Posterior vena cava (tissue), 2 donors: ENCODE measurements at regions of chr6 and their contacts with region 1.

Region 1: GRCh38 chr6:35445696-35446095 is 6.4 kb upstream of the FANCE start:
- DNase-seq: no peak

Region 2: DNA sequence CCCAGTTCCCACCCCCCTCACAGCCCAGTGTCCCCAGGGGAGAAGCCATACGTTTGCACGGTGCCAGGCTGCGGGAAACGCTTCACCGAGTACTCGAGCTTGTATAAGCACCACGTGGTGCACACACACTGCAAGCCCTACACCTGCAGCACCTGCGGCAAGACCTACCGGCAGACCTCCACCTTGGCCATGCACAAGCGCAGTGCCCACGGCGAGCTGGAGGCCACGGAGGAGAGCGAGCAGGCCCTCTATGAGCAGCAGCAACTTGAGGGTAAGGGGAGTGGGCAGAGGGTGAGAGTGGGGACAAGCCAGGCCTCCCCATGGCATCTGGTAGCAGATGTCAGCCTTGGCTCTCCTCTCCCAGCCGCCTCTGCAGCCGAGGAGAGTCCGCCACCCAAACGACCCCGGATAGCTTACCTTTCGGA is 153.2 kb before region 1 on chr6:
- intact Hi-C with region 1: loop called in 1 of 2 experiments (anchors 1 kb)
- DNase-seq: no peak

Region 3: DNA sequence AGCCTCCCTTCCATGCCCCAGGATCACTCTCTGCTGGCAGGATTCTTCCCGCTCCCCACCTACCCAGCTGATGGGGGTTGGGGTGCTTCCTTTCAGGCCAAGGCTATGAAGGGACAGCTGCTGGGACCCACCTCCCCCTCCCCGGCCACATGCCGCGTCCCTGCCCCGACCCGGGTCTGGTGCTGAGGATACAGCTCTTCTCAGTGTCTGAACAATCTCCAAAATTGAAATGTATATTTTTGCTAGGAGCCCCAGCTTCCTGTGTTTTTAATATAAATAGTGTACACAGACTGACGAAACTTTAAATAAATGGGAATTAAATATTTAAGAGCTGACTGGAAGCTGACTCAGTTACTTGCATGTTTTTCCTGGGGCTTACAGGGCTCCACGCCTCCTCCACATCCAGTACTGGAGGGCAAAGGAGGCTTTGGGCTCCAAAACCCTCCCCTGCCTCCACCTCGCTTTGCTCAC is 17.8 kb before region 1 on chr6:
- intact Hi-C with region 1: loop called in 1 of 2 experiments (anchors 1 kb)
- DNase-seq: no peak